Cardiac septum (tissue), 1 donor: ENCODE measurements at regions of chr7 and their contacts with region 1.

Region 1: GRCh38 chr7:130277763-130278643 is 11.3 kb downstream of the CPA2 start:
- DNase-seq: no peak

Region 2: GRCh38 chr7:130352221-130353075 is 74.4 kb after region 1 on chr7:
- intact Hi-C with region 1: loop called (anchors 5 kb)
- DNase-seq: peak; percentile 67

Region 3: DNA sequence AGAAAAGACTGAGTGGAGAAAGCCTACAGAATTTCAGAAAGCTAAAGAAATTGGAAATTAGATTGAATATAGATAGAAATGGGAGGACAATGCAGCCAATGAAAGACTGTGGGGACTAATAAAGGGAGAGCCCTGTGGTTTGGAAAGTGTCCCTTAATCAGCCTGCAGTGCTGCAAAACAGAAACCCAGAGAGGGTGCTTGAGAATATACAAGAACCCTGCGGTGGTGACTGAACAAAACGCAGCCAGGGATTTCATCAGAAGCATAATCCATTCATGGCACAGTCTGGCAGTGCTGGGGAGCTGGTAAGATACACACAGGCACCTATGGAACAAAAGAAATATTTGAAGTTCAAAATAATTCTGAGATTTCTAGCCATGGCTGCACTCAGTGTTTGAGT is 143.7 kb after region 1 on chr7:
- intact Hi-C with region 1: no loop called
- DNase-seq: no peak

Region 4: DNA sequence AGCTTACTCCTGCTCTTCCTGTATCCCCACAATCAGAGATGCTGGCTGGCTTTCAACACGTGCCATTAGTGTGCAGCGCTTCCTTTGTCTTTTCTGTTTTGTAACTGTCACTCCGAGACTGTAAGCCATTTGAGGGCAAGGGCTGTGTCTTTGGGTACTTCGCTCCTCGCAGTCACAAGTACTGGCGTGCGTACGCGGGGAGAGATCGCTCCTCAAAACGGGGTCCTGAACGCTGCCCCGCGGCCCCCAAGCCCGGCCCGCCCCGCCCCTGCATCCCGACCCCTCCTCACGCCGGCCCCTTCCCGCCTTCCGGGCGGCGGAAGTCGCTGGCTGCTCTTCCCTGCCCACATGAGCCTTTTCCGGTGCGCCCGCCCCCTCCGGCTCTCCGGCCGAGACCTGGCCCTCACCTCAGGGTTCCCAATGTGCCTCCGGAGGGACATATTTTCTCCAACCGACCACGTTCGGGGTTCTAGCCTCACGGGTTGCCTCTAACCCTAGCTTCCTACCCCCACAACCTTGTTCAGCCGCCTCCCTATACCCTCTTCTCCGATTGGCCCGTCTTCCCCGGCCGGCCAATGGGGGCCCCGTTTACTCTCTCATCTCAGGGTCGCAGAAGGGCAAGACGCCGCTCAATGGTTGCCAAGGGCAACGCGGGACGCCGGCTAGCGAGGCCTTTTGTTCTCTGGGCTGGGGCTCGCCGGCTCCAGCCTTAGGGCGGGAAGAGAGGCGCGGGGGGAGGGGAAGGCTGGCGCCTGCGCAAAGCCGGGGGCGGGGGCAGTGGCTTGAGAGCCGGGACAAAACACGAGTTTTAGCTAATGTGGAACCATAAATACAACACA is 162.7 kb after region 1 on chr7 and contains the start of gene CEP41:
- intact Hi-C with region 1: loop called (anchors 10 kb)
- DNase-seq: peak; percentile 97
- total RNA-seq, gene CEP41: 4.6 TPM

Region 5: DNA sequence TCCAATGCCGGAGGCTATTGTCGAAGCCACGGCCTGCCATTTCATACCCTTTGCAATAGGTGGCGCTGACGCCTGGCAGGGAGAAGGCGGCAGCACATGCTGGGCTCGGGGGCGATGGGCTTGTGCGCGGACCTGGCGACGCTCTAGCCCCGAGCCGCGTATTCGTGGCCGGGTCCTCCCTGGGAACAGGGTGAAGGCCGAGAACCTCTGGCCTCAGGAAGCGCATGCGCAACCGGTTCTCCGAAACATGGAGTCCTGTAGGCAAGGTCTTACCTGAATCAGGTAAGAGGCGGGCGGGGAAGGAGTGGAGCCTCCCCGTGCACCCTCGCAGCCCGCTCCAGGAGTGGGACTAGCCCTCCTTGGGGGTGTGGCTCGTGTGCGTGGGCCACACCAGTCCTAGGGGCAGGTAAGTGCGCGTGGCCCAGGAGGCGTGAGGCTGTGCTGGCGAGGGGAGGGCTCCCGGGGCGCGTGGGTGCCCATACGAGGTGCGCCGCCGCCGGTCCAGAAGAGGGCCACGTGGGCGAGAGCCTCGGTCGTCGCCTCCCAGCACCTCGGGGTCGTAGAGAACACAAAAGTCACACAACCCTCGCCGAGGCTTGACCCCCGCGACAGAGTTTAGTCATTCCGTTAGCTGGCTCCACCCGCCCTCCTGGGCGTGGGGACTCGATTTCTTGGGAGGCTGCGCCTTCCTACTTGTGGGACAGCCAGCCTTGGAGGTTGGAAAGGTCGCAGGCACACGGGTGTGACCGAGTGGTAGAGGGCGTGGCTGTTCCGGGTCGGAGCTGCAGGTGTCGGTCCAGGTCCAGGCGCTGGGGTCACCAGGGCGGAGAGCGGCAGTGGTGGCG is 208.3 kb after region 1 on chr7:
- intact Hi-C with region 1: loop called (anchors 5 kb)
- DNase-seq: no peak